ENCODE measurements at regions of chr5 and their contacts with region 1.

Region 1: GRCh38 chr5:6049662-6050061 is 328.7 kb downstream of the MED10 start:
- H3K4me3 Mint-ChIP-seq: no peak overlapping the region
- H3K27ac Mint-ChIP-seq: no peak overlapping the region
- H3K4me1 Mint-ChIP-seq: no peaks in the 10 kb centered on the region
- H3K27me3 Mint-ChIP-seq: no peaks in the 10 kb centered on the region

Region 2: GRCh38 chr5:6096101-6096500 is 46.4 kb after region 1 on chr5:
- intact Hi-C with region 1: loop called (anchors 1 kb)
- H3K4me3 Mint-ChIP-seq: no peak overlapping the region
- H3K27ac Mint-ChIP-seq: no peak overlapping the region
- H3K4me1 Mint-ChIP-seq: no peaks in the 10 kb centered on the region
- H3K27me3 Mint-ChIP-seq: no peaks in the 10 kb centered on the region

Region 3: DNA sequence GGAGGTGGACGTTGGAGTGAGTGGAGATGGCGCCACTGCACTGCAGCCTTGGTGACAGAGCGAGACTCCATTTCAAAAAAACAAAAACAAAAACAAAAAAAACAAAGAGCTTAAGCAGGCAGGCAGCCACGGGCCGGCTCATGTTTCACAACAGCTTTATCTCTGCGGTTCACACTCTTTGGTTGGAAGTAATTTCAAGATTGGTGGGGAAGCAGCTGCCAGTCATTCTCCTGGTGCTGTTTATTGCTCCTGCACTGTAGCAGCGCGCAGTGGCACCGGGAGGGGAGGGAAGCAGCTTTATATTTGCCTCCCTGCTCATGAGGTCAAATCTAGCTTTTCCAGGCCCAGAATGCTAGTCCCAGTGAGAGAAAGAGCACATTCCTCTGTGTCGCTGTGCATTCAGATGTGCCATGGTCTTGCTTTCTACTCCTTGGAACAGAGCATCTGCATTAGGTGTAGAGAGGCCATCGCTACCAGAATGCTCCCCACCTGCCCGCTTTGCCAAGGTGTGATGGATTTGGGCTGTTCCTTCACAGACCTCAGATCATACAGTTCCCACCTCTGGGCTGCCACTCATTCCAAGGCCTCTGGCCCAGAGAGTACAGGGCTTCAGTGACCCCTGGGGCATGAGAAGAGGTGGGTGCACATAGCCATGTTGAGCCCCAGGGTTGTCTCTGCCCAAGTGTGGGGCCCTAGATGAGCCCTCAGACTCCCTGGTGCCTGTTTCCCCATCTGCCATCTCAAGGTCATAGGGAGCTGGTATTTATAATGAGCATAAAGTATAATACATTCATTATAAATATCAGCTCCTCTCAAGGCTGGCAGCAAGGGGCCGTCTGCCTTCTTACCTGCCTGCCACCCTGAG is 58.2 kb after region 1 on chr5:
- intact Hi-C with region 1: no loop called
- H3K4me3 Mint-ChIP-seq: no peak overlapping the region
- H3K27ac Mint-ChIP-seq: no peak overlapping the region
- H3K4me1 Mint-ChIP-seq: no peaks in the 10 kb centered on the region
- H3K27me3 Mint-ChIP-seq: no peaks in the 10 kb centered on the region

Measured in dendritic cell treated with granulocyte-macrophage colony-stimulating factor and Interleukin-4, amounts not matched to agents 40 ng/mL and 50 ng/mL, for 4 days (primary cell).